Heart left ventricle (tissue), 16 donors: ENCODE measurements at regions of chr12 and their contacts with region 1.

Region 1: GRCh38 chr12:111451649-111452129 is 46.0 kb downstream of the SH2B3 start:
- DNase-seq: no peak
- ATAC-seq: peak in 1 of 4 donors; percentile 2
- H3K4me3 ChIP-seq: no peak overlapping the region
- H3K27ac ChIP-seq: peak overlapping the region in 8 of 12 donors; percentile 45 to 89 (median 76)
- H3K4me1 ChIP-seq: peaks cover 10 to 77% (median 58%) of the 10 kb centered on the region in 12 donors
- H3K27me3 ChIP-seq: no peaks in the 10 kb centered on the region
- CTCF ChIP-seq: peak; percentile 72 to 88 (median 80)
- POLR2A ChIP-seq: no peak

Region 2: GRCh38 chr12:111330800-111331752 is 120.6 kb before region 1 on chr12:
- intact Hi-C with region 1: loop called in 2 of 10 experiments (anchors 5 kb)
- DNase-seq: no peak
- ATAC-seq: peak in 3 of 4 donors; percentile 35 to 45 (median 39)
- H3K4me3 ChIP-seq: no peak overlapping the region
- H3K27ac ChIP-seq: no peak overlapping the region
- H3K4me1 ChIP-seq: no peaks in the 10 kb centered on the region
- H3K27me3 ChIP-seq: peaks cover 0 to 7% (median 0%) of the 10 kb centered on the region in 9 donors
- CTCF ChIP-seq: peak; percentile 26 to 61 (median 40)
- POLR2A ChIP-seq: no peak